Caco-2 (cell line): ENCODE measurements at regions of chr19 and their contacts with region 1.

Region 1: GRCh38 chr19:34712395-34713261 is 21.4 kb upstream of the ZNF181 start:
- DNase-seq: peak; percentile 59 to 77
- H3K4me3 ChIP-seq: no peak overlapping the region
- H3K4me3 Mint-ChIP-seq: no peak overlapping the region
- H3K27ac Mint-ChIP-seq: no peak overlapping the region
- H3K4me1 ChIP-seq: no peaks in the 10 kb centered on the region
- H3K4me1 Mint-ChIP-seq: no peaks in the 10 kb centered on the region
- H3K27me3 ChIP-seq: no peaks in the 10 kb centered on the region
- H3K27me3 Mint-ChIP-seq: peaks cover 2% of the 10 kb centered on the region
- CTCF ChIP-seq: peak; percentile 47 to 72

Region 2: DNA sequence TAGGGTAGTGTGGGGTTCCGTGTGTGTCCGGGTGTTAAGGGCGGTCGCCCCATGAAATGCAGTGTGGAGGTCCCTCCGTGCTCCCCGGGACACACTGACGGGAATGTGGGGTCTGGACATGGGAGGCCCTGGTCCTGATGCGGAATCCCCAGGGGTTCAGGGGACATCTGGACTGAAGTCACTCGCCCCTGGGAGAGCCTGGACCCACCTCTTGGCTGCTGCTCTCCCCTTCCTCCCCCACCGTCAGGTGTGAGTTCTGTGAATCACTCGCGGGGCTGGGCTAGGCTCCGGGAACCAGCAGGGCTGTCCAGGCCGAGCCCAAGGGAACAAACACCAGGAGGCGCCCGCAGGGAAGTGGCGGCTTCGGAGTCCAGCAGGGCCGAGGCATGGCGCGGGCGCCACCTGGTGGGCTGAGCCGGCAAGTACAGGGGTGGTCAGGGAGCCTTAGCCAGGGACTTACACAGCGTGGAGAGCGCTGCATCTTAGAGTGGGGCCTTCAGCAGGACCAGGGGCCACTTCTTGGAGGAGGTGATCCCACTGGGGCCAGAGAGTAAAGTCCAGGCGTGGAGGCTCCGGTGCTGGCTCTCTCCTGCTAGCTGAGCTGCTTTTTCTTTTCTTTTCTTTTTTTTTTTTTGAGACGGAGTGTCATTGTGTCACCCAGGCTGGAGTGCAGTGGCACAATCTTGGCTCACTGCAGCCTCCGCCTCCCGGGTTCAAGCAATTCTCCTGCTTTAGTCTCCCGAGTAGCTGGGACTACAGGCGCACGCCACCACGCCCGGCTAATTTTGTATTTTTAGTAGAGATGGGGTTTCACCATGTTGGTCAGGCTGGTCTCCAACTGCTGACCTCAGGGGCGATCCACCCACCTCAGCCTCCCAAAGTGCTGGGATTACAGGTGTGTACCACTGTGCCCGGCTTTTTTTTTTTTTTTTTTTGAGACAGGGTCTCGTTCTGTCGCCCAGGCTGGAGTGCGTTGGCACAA is 211.0 kb before region 1 on chr19:
- CTCF ChIA-PET with region 1: no interaction called
- POLR2A ChIA-PET with region 1: no interaction called
- intact Hi-C with region 1: loop called (anchors 1 kb)
- DNase-seq: peak; percentile 90 to 96
- H3K4me3 ChIP-seq: no peak overlapping the region
- H3K4me3 Mint-ChIP-seq: no peak overlapping the region
- H3K27ac Mint-ChIP-seq: peak overlapping the region; percentile 67
- H3K4me1 ChIP-seq: peaks cover 4% of the 10 kb centered on the region; the same call in 1 of the 2 replicates
- H3K4me1 Mint-ChIP-seq: peaks cover 12% of the 10 kb centered on the region
- H3K27me3 ChIP-seq: no peaks in the 10 kb centered on the region
- H3K27me3 Mint-ChIP-seq: no peaks in the 10 kb centered on the region
- CTCF ChIP-seq: peak; percentile 98

Region 3: DNA sequence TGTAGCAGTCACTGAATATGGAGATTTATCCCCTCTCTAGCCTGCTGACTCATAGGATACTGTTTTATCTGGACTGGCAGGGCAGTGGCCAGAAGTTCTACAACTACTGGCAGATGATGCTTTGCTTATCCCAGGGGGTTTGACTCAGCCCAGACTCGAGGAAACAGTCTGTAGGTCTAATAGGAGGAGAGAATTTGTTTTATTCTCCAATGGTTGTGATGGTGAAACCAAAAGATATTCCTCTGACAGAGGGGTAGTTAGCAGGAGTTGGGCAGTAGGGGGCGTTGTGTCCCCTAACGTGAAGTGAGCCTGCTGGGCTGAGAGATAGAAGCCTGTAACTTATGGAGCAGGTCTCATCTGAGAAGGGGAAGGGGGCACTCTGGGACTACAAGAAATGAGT is 156.1 kb before region 1 on chr19:
- CTCF ChIA-PET with region 1: no interaction called
- POLR2A ChIA-PET with region 1: no interaction called
- intact Hi-C with region 1: loop called (anchors 1 kb)
- DNase-seq: peak in 1 of 2 experiments; percentile 36
- H3K4me3 ChIP-seq: no peak overlapping the region
- H3K4me3 Mint-ChIP-seq: no peak overlapping the region
- H3K27ac Mint-ChIP-seq: no peak overlapping the region
- H3K4me1 ChIP-seq: no peaks in the 10 kb centered on the region
- H3K4me1 Mint-ChIP-seq: no peaks in the 10 kb centered on the region
- H3K27me3 ChIP-seq: no peaks in the 10 kb centered on the region
- H3K27me3 Mint-ChIP-seq: peaks cover 27% of the 10 kb centered on the region
- CTCF ChIP-seq: peak; percentile 36 to 47

Region 4: DNA sequence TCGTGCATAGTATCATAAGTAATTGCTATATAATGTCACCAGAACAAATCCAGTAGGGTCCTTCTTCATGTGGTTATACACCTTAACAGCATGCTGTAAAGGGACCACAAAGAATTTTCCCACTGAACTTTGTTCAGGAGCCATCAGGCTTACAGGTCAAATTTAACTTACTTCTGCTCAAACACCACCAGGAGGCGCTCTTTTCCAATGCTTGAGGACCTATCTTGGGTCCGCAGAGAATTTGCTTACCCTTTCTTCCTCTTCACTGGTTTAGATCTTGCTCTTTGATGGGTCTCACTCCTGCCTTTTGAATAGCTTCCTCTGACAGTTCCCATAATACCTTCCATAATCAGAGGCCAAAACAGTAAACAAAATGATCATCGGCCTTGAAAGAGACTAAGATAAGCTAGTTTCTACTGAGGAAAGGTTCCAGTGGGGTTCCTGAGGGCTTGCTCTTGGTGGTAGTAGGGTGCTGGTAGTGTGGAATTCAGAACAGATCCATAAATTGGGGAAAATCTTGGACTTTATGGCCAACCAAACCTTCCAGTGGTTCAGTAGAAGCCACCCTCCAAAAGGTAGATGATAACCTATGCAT is 73.0 kb before region 1 on chr19:
- CTCF ChIA-PET with region 1: no interaction called
- POLR2A ChIA-PET with region 1: no interaction called
- intact Hi-C with region 1: loop called (anchors 1 kb)
- DNase-seq: peak in 1 of 2 experiments; percentile 54
- H3K4me3 ChIP-seq: no peak overlapping the region
- H3K4me3 Mint-ChIP-seq: no peak overlapping the region
- H3K27ac Mint-ChIP-seq: no peak overlapping the region
- H3K4me1 ChIP-seq: no peaks in the 10 kb centered on the region
- H3K4me1 Mint-ChIP-seq: no peaks in the 10 kb centered on the region
- H3K27me3 ChIP-seq: no peaks in the 10 kb centered on the region
- H3K27me3 Mint-ChIP-seq: peaks cover 4% of the 10 kb centered on the region
- CTCF ChIP-seq: peak; percentile 59 to 63